Activated CD4-positive, alpha-beta memory T cell treated with anti-CD3 and anti-CD28 coated beads, Interleukin-2, amount 10 ng/mL, durations not matched to agents 7 days and 5 days (primary cell): ENCODE measurements at regions of chr15 and their contacts with region 1.

Region 1: DNA sequence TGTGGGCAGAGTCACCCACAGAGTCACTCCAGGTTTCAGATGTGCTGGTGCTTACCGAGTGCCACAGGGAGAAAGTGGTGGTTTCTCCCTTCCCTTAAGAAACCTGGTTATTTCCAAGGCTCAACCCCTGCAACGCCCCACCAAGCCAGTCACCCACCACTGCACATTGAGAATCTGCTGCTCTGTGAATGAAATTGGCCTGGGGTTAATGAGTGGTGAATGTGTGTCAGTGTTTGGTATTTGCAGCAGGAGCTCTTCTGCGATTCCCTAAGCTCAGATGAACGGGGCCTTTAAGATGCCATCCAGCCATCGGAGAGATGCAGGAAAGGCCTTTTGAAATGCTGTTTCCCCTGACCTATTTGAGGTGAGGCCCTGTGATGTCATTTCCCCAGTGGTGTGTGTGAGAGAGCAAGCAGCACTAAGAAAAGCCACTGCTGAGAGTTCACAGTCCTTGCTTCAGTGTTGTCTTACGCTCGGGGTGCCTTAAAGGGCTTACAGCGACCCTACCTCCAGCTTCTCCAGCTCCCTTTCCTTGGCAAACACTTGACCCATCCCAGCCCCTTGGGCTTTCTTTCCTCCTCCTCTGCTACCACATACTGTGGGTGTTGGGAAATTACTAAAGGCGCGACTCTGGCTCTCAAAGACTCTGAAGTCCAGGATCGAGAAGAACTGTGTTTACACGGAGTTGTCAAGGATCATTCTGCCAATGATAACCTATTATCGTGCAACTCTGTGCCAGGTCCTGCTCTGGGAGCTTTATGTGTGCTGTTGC is 68.9 kb downstream of the SMAD3 start:
- DNase-seq: peak; percentile 80
- H3K4me3 Mint-ChIP-seq: peak overlapping the region; percentile 73
- H3K27ac Mint-ChIP-seq: peak overlapping the region; percentile 89
- H3K4me1 Mint-ChIP-seq: peaks cover 93% of the 10 kb centered on the region
- H3K27me3 Mint-ChIP-seq: no peaks in the 10 kb centered on the region

Region 2: GRCh38 chr15:67085818-67086636 is 48.2 kb before region 1 on chr15:
- CTCF ChIA-PET with region 1: no interaction called
- POLR2A ChIA-PET with region 1: interaction called, 24 read pairs
- DNase-seq: peak; percentile 57
- H3K4me3 Mint-ChIP-seq: peak overlapping the region; percentile 37
- H3K27ac Mint-ChIP-seq: peak overlapping the region; percentile 95
- H3K4me1 Mint-ChIP-seq: peaks cover 99% of the 10 kb centered on the region
- H3K27me3 Mint-ChIP-seq: no peaks in the 10 kb centered on the region

Region 3: DNA sequence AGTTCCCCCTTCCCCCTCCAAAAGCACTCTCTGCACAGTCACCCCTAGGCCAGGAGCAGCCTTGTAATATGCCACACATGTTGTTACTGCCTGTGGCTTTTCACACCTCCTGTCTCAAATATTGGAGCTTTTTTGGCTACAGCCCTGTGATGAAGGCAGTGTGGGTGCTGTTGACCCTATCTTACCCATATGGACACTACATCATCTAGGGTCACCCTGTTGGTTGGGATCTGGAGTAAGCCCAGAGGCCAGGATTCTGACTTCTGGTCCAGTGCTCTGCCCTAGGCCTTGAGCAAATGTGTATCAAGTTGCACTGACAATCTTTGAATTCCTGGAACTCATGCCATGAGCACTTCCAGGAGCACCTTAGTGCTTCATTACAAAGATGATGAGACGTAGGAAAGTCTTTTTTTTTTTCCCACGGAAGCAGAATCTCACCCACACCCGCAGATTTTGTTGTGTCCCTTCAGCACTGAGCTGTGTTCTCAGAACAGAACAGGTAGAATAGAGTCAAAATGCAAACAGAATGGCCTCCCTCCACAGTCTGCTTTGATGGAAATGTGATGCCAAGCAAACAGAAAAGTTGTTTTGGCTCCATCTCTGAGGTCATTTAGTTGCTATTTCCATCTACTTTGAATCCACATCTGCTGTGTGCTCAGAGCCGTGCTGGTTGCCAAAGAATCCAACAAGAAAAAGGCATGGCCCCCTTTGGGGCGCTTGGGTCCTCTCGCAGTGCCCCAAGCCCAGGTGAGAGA is 19.2 kb before region 1 on chr15:
- CTCF ChIA-PET with region 1: interaction called, 7 read pairs
- POLR2A ChIA-PET with region 1: interaction called, 47 read pairs
- DNase-seq: peak; percentile 41
- H3K4me3 Mint-ChIP-seq: peak overlapping the region; percentile 3
- H3K27ac Mint-ChIP-seq: peak overlapping the region; percentile 80
- H3K4me1 Mint-ChIP-seq: peaks cover 93% of the 10 kb centered on the region
- H3K27me3 Mint-ChIP-seq: no peaks in the 10 kb centered on the region

Region 4: DNA sequence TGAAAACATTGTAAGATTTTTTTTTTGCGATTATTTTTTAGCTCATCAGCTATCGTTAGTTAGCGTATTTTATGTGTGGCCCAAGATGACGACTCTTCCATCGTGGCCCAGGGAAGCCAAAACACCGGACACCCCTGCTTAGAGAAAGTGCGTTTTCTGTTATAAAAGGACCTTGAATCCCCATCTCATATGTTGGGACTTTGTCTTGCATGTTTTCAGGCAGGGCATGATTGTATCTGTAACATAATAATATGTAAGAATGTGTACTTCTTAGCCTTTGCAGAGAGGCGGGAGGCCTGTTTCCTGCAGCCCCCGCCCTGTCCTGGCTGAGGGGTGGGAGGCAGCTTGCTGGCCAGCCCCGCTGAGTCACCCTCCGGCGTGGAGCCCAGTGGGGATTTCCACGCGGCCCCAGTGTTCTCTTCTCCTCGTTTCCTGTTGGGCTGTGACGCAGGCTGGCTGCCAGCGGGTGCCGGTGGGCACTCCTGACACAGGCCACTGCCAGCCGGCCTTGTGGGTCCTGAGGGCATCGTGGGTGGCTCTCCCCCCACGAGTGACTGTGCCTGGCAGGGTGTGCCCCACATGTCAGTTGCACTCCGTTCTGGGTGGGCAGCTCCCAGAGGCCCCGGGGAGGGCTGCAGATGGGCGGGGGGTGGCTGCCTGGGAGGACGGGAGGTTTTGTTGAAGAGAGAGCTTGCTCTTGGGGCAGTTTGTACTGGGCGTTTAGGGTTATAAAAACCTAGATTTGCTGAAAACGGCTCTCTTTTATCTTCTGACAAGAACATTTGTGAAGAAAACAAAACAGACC is 13.2 kb before region 1 on chr15:
- CTCF ChIA-PET with region 1: interaction called, 7 read pairs
- POLR2A ChIA-PET with region 1: interaction called, 47 read pairs
- DNase-seq: peak; percentile 86
- H3K4me3 Mint-ChIP-seq: peak overlapping the region; percentile 23
- H3K27ac Mint-ChIP-seq: peak overlapping the region; percentile 77
- H3K4me1 Mint-ChIP-seq: peaks cover 95% of the 10 kb centered on the region
- H3K27me3 Mint-ChIP-seq: no peaks in the 10 kb centered on the region

Region 5: DNA sequence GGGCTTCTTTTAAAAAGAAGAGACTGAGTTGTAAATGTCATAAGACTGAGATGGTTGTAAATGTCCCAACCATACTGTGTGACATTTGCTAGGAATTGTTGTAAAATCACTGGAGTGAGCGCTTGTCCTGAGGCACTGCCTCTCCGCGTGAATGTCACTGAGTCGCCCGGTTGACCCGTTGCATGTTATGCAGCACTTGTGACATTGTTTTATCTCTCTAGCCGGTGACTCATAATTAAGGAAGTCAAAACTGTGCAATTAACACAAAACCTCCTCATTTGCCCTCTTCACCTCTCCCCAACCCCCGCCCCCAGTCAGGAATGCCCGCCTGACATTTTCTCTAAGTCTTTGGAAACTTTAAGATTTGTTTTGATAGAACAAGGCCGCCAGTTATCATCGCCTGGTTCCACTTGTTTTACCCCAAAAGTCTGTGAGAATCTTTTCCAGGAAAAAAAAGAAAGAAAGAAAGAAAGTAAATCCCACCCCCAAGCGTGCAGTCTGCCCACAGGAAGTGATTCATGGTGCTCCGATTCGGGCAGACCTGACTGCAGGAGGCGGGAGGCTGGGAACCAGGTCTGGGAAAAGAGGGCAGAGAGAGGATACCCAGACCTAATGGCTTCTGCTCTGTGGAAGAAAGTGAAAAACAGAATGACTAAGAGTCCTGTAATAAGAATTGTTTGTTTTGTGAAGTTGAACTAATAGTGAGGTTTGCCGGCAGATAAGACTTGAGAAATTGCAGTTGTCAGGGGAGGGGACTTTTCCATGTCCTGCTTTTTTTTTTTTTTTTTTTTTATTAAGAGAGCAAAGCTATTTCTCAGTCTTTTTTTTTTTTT is 16.0 kb after region 1 on chr15:
- CTCF ChIA-PET with region 1: no interaction called
- POLR2A ChIA-PET with region 1: interaction called, 59 read pairs
- DNase-seq: peak; percentile 48
- H3K4me3 Mint-ChIP-seq: peak overlapping the region; percentile 33
- H3K27ac Mint-ChIP-seq: peak overlapping the region; percentile 53
- H3K4me1 Mint-ChIP-seq: peaks cover 75% of the 10 kb centered on the region
- H3K27me3 Mint-ChIP-seq: no peaks in the 10 kb centered on the region

Region 6: GRCh38 chr15:67700023-67700422 is 565.8 kb after region 1 on chr15:
- CTCF ChIA-PET with region 1: no interaction called
- POLR2A ChIA-PET with region 1: no interaction called
- DNase-seq: no peak
- H3K4me3 Mint-ChIP-seq: no peak overlapping the region
- H3K27ac Mint-ChIP-seq: no peak overlapping the region
- H3K4me1 Mint-ChIP-seq: no peaks in the 10 kb centered on the region
- H3K27me3 Mint-ChIP-seq: no peaks in the 10 kb centered on the region